Heart right ventricle (tissue), 16 donors: ENCODE measurements at regions of chr20 and their contacts with region 1.

Region 1: DNA sequence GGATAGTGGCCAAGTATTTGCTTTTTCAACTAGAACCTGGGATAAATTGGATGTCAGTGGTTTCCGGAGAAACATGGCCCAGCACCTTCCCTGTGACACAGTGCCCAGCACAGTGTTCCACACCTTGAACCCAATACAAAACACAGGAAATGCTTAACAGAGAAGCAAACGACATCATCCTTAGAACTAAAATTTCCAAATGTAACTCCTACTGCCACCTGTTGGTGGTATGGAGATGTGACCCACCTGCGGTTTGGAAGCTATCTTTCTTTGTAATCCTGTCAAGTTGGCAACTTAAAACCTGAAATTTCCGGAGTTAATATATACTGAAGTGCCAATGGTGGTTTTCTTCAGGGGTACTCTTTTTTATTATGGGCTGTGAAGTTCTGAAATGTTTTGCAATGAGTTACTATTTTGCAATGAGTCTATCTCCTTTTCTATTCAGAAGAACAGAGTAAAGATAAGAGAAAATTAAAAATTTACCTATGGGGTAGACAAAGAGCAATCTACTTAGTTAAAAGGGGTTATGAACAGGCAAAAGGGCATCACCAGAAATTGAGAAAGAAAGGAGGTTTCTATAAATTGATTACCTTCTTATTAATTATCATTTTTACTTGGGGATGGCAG is 658.8 kb downstream of the PTPRT start:
- DNase-seq: peak in 1 of 2 donors; percentile 10
- ATAC-seq: no peak
- H3K4me3 ChIP-seq: no peak overlapping the region
- H3K27ac ChIP-seq: no peak overlapping the region
- H3K4me1 ChIP-seq: peaks cover 0 to 14% (median 7%) of the 10 kb centered on the region in 9 donors
- H3K27me3 ChIP-seq: peaks cover 0 to 8% (median 0%) of the 10 kb centered on the region in 7 donors
- CTCF ChIP-seq: peak; percentile 47 to 82 (median 73)

Region 2: DNA sequence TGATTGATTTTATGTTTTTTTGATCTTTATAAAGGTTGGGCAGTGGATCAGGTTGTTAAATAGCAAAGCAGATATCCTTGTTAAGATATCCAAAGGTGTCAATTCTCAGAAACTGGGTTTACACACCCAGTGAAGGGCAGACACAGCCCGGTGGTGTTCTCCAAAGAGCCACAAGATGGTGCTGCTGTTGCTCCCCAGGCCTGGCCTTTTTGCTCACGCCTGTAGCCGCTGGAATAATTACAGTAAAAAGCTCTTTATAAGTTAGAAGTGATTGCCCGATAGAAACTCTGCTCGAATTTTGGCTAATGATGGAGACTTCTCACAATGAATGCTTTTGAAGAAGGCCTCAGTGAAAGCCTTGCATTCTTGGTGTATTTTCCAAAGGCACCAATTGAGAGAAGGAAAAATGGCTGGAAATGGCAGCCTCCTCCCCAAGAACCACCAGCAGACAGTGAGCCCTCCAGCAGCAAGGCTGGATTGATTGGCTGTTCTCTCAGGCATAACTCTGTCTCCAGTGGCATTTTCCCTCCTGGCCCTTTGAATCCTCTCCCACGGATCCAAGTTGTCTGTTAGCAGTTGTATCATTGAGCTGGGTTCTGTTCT is 792.2 kb before region 1 on chr20:
- intact Hi-C with region 1: loop called in 2 of 10 experiments (anchors 10 kb)
- DNase-seq: peak; percentile 23 to 38
- ATAC-seq: peak in 7 of 8 donors; percentile 54 to 71 (median 66)
- H3K4me3 ChIP-seq: no peak overlapping the region
- H3K27ac ChIP-seq: no peak overlapping the region
- H3K4me1 ChIP-seq: no peaks in the 10 kb centered on the region
- H3K27me3 ChIP-seq: no peaks in the 10 kb centered on the region
- CTCF ChIP-seq: peak; percentile 42 to 87 (median 79)

Region 3: GRCh38 chr20:41955999-41956705 is 574.8 kb before region 1 on chr20:
- intact Hi-C with region 1: loop called in 1 of 10 experiments (anchors 5 kb)
- DNase-seq: peak in 1 of 2 donors; percentile 4
- ATAC-seq: peak in 2 of 8 donors; percentile 39 to 41
- H3K4me3 ChIP-seq: no peak overlapping the region
- H3K27ac ChIP-seq: no peak overlapping the region
- H3K4me1 ChIP-seq: no peaks in the 10 kb centered on the region
- H3K27me3 ChIP-seq: peaks cover 0 to 15% (median 0%) of the 10 kb centered on the region in 7 donors
- CTCF ChIP-seq: peak; percentile 18 to 61 (median 49)

Region 4: GRCh38 chr20:42191143-42191917 is 339.6 kb before region 1 on chr20:
- intact Hi-C with region 1: loop called in 1 of 10 experiments (anchors 10 kb)
- DNase-seq: no peak
- ATAC-seq: no peak
- H3K4me3 ChIP-seq: no peak overlapping the region
- H3K27ac ChIP-seq: no peak overlapping the region
- H3K4me1 ChIP-seq: no peaks in the 10 kb centered on the region
- H3K27me3 ChIP-seq: no peaks in the 10 kb centered on the region
- CTCF ChIP-seq: peak in 1 of 9 donors; percentile 34

Region 5: DNA sequence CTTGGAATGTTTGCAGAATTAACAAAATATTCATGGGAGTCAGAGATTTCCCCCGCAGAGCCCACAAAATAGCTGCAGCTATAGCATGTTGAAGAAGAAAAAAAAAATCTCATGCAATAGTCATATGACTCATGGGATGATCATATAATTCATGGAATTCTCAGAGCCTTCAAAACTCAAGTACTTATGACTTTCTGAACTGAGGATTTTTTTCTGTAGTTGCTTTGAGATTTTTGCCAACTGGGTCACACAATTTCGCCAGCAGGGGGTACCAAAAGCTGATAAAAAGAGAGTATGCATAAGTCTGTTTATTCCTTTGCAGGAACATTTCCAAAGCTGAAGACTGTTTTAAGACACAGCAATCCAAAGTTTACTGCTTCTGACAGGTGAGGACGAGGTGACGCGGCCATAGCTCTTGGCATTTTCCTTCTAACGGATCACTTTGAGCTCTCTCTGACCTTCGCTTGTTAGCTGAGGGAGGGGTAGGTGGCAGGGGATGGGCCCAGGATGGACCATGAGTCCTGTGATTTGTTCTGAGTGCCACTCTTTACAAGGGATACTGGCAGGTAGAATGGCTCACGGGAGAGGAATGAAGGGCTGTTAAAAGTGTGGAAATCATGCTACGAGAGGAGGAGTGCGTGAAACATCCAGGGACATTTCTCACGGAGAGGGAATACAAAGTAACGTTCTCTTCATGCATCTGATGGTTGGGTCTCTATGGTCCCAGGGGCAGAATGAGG is 326.6 kb before region 1 on chr20:
- intact Hi-C with region 1: loop called in 6 of 10 experiments (anchors 2 to 10 kb)
- DNase-seq: peak in 1 of 2 donors; percentile 19
- ATAC-seq: no peak
- H3K4me3 ChIP-seq: no peak overlapping the region
- H3K27ac ChIP-seq: no peak overlapping the region
- H3K4me1 ChIP-seq: peaks cover 0 to 9% (median 0%) of the 10 kb centered on the region in 9 donors
- H3K27me3 ChIP-seq: no peaks in the 10 kb centered on the region
- CTCF ChIP-seq: peak; percentile 14 to 64 (median 46)

Region 6: DNA sequence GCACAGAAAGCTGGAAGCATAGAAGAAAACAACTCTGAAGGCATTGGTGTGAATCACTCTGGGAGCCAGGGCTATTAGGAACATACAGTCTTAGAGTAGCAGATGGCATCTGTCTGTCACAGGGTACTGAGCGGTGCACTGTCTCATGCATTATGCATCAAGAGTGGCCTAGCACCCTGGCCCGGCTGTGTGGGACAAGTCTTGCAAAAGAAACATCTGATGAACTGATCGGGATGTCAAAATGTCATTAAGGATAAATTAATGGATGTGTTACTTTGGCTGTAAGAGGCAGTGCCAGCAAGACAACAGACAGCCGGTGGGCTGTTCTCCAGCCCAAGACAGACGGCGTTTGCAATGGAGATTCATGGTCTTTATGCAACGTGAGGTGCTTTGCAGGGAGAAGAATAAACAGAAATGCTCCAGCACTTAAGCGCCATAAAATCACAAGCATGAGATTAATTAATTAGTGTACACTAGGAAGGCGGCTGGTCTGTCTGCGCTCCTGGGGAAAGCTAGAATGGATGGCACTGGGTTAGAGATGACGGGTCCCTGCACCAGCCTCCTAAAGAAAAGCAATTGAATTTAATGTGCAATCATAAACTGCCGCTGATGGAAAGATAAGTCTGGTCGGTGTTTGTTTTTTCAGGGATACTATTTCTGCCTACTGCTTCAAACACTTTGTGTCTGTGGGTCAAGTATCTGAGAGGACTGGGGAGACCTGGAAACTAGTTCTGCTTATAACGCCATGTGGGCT is 312.1 kb before region 1 on chr20:
- intact Hi-C with region 1: loop called in 1 of 10 experiments (anchors 5 kb)
- DNase-seq: no peak
- ATAC-seq: no peak
- H3K4me3 ChIP-seq: no peak overlapping the region
- H3K27ac ChIP-seq: no peak overlapping the region
- H3K4me1 ChIP-seq: no peaks in the 10 kb centered on the region
- H3K27me3 ChIP-seq: no peaks in the 10 kb centered on the region
- CTCF ChIP-seq: no peak

Region 7: GRCh38 chr20:42255821-42256220 is 275.1 kb before region 1 on chr20:
- intact Hi-C with region 1: no loop called
- DNase-seq: no peak
- ATAC-seq: no peak
- H3K4me3 ChIP-seq: no peak overlapping the region
- H3K27ac ChIP-seq: no peak overlapping the region
- H3K4me1 ChIP-seq: peaks cover 0 to 14% (median 0%) of the 10 kb centered on the region in 9 donors
- H3K27me3 ChIP-seq: peaks cover 0 to 5% (median 0%) of the 10 kb centered on the region in 7 donors
- CTCF ChIP-seq: no peak

Region 8: GRCh38 chr20:42598581-42598980 is 67.6 kb after region 1 on chr20:
- intact Hi-C with region 1: loop called in 1 of 10 experiments (anchors 10 kb)
- DNase-seq: no peak
- ATAC-seq: no peak
- H3K4me3 ChIP-seq: no peak overlapping the region
- H3K27ac ChIP-seq: no peak overlapping the region
- H3K4me1 ChIP-seq: no peaks in the 10 kb centered on the region
- H3K27me3 ChIP-seq: peaks cover 0 to 7% (median 0%) of the 10 kb centered on the region in 7 donors
- CTCF ChIP-seq: no peak

Region 9: DNA sequence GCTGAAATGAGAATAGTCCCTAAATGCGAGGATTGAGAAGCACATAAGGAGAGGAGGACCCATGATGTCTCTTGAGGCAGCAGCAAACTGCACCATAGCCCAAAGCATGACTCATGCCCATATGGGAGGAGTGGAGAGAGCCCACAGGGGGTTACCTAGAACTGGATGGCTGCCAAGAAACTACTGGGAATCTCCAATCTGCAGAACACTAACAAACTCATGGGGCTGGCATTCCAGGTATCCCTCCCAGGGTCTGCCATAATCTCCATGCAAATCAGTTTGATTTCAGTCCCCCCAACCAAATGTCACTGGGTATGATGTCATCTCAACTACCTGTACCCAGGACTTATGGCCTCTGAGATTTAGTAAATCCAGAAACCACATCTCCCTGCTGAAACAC is 248.3 kb after region 1 on chr20:
- intact Hi-C with region 1: no loop called
- DNase-seq: no peak
- ATAC-seq: no peak
- H3K4me3 ChIP-seq: no peak overlapping the region
- H3K27ac ChIP-seq: no peak overlapping the region
- H3K4me1 ChIP-seq: no peaks in the 10 kb centered on the region
- H3K27me3 ChIP-seq: peaks cover 0 to 4% (median 0%) of the 10 kb centered on the region in 7 donors
- CTCF ChIP-seq: no peak